Right cardiac atrium (tissue), 5 donors: ENCODE measurements at regions of chr6 and their contacts with region 1.

Region 1: DNA sequence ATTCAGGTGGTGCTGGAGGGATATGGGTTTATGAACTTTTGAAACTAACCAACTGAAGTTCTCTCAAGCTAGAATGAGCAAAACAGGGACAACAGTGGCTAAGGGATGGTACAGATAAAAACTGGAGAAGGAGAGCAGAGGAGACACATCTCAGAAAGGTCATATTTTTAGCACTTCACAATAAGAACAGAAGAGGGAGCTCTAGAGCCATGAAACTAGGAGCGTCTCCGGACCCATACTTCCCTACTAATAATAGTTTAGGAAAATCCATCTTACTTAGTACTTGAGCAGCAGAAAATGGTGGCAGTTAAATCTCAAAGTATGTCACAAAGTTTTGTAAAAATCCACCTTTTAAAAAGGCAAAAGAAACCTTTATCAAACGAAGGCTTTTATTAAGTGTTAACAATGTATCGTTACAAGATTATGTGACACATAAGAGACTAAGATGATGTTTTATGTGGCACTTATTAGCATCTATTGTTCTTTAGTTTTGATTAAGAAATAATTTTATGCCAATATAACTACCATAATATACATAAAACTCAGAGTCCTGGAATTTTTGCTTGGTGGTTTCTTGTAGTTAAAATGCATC is 278.6 kb downstream of the TBC1D32 start:
- DNase-seq: no peak
- ATAC-seq: peak; percentile 62
- H3K4me3 ChIP-seq: no peak overlapping the region
- H3K27ac ChIP-seq: no peak overlapping the region
- H3K4me1 ChIP-seq: no peaks in the 10 kb centered on the region
- H3K27me3 ChIP-seq: no peaks in the 10 kb centered on the region

Region 2: DNA sequence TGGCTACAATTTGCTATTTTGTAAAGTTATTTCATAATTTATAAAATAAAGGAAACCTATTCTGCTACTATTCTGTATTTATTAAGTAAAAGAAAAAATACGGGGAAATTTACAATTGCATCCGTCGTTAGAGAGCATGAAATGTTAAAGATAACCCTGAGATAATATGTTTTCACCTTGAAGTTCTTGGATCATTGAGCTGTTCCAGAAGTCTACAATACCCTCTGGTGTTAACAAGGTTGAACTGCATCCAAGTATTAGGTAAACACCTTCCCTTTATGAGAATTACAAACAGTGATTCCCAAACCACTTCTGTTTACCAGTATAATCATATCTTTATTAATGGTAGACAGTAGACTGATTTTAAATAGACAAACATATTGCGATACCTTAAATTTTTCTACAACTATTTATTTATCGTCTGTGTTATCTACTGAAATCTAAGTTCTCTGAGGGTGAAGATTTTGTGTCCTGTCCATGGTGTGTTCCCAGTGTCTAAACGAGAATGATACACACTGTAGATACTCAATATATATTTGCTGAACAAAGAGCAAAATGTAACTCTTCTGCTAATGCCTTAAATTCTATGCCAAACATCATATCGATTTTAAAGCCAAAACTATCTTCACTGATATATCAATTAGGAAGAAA is 250.4 kb after region 1 on chr6:
- intact Hi-C with region 1: loop called in 2 of 4 experiments (anchors 5 to 10 kb)
- DNase-seq: no peak
- ATAC-seq: no peak
- H3K4me3 ChIP-seq: no peak overlapping the region
- H3K27ac ChIP-seq: no peak overlapping the region
- H3K4me1 ChIP-seq: no peaks in the 10 kb centered on the region
- H3K27me3 ChIP-seq: no peaks in the 10 kb centered on the region

Region 3: DNA sequence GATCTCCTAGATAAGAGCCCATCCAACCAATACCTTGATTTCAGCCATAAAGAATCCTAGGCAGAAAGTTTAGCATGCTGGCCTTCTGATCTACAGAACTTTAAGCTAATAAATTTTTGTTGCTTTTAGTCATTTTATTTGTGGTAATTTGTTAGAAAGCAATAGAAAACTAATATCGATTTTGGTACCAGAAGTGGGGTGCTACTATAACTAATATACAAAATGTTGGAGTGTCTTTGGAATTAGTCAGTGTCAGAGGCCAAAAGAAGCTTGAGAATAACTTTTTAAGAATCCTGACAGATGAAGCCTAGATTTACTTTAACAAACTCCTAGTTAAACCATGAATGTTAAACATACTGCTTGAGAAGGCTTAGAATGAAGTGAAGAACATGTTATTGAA is 1260.2 kb after region 1 on chr6:
- intact Hi-C with region 1: no loop called
- DNase-seq: no peak
- ATAC-seq: no peak
- H3K4me3 ChIP-seq: no peak overlapping the region
- H3K27ac ChIP-seq: no peak overlapping the region
- H3K4me1 ChIP-seq: no peaks in the 10 kb centered on the region
- H3K27me3 ChIP-seq: no peaks in the 10 kb centered on the region